Gastrocnemius medialis (tissue), 4 donors: ENCODE measurements at regions of chr19 and their contacts with region 1.

Region 1: GRCh38 chr19:15379083-15379995 is at the start of gene AKAP8:
- DNase-seq: peak; percentile 97 to 99
- ATAC-seq: peak; percentile 84 to 85
- H3K4me3 ChIP-seq: peak within 1 kb of the TSS; percentile 84 to 100 (median 88)
- H3K27ac ChIP-seq: peak within 1 kb of the TSS; percentile 92 to 99 (median 96)
- H3K4me1 ChIP-seq: peaks cover 38 to 39% of the 10 kb centered on the region in 2 donors
- H3K27me3 ChIP-seq: no peaks in the 10 kb centered on the region
- CTCF ChIP-seq: no peak
- POLR2A ChIP-seq: peak; percentile 67 to 78
- total RNA-seq, gene AKAP8: 26.0 to 41.5 (median 27.5) TPM

Region 2: GRCh38 chr19:15264061-15264932 is 115.0 kb before region 1 on chr19:
- in situ Hi-C with region 1: loop called in 1 of 4 experiments (anchors 25 kb)
- intact Hi-C with region 1: no loop called
- DNase-seq: peak in 1 of 2 donors; percentile 65
- ATAC-seq: peak; percentile 14 to 31
- H3K4me3 ChIP-seq: no peak overlapping the region
- H3K27ac ChIP-seq: peak overlapping the region; percentile 61 to 80 (median 68)
- H3K4me1 ChIP-seq: peaks cover 50 to 54% of the 10 kb centered on the region in 2 donors
- H3K27me3 ChIP-seq: no peaks in the 10 kb centered on the region
- CTCF ChIP-seq: peak; percentile 68 to 88 (median 78)
- POLR2A ChIP-seq: no peak

Region 3: DNA sequence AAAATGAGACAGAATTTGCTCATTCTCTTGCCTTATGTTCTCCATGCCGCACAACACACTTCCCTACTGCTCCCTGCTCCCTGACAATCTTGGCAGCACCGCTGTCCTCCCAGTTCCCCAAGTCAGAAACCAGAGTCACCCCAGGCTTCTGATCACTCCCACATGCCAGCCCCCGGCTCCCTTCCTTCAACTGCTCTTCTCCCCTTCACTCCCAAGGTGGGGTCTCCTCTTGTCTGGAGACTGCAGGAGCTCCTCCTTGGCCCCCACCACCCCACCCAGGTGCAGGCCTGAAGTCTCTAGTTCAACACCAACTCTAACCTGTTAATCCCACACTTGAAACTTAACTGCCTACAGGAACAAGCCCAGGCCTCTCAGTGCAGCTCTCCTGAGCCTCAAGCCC is 17.1 kb after region 1 on chr19:
- in situ Hi-C with region 1: no loop called
- intact Hi-C with region 1: loop called (anchors 2 kb)
- DNase-seq: no peak
- ATAC-seq: no peak
- H3K4me3 ChIP-seq: no peak overlapping the region
- H3K27ac ChIP-seq: peak overlapping the region in 1 of 4 donors; percentile 27
- H3K4me1 ChIP-seq: peaks cover 15 to 25% of the 10 kb centered on the region in 2 donors
- H3K27me3 ChIP-seq: no peaks in the 10 kb centered on the region
- CTCF ChIP-seq: no peak
- POLR2A ChIP-seq: no peak

Region 4: DNA sequence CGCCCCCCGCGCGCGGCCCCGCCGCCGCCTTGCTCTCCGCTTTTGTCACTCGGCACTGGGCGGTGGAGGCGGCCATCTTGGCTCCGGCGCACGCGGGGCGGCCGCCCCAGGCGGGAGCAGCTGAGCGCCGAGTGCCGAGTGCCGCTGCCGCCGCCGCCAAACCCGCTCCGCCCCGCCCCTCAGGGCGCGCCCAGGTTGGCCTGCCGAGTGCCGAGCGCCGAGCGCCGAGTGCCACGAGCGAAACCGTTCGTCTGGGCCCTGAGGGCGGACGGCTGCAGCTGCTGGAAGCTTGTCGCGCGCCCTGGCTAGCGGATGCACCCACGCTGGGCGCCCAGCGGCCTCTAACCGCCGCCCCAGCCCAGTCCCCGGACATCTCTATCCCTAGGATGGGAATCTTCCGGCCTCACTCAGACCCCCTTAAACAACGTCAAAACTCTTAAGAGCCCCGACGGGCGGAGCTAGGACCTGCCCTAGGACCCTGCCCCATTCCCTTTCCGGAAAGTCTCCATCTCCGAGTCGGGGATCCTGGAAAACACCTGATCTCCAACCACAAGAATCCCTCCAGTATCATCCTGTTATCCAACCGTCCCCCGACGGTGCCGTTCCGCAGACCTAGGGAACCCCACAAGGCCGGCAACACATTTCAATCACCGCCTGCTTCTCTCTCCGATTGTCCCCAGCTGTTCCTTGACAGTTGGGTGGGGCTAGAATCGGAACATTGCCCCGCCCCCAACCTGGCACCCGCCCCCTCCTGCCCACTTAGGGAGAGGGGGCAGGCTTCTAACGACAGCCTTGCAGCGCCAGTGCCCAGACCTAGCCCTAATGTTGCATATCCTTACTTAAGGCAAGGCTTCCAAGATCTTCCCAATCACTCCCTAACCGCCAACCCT is 53.5 kb after region 1 on chr19:
- in situ Hi-C with region 1: loop called in 1 of 4 experiments (anchors 10 kb)
- intact Hi-C with region 1: no loop called
- DNase-seq: peak; percentile 83 to 88
- ATAC-seq: peak; percentile 82 to 84
- H3K4me3 ChIP-seq: peak overlapping the region; percentile 64 to 80 (median 74)
- H3K27ac ChIP-seq: peak overlapping the region; percentile 90 to 96 (median 94)
- H3K4me1 ChIP-seq: peaks cover 17 to 21% of the 10 kb centered on the region in 2 donors
- H3K27me3 ChIP-seq: no peaks in the 10 kb centered on the region
- CTCF ChIP-seq: peak in 1 of 5 experiments; percentile 4
- POLR2A ChIP-seq: peak; percentile 48 to 66